ENCODE measurements at regions of chr11 and their contacts with region 1.

Region 1: DNA sequence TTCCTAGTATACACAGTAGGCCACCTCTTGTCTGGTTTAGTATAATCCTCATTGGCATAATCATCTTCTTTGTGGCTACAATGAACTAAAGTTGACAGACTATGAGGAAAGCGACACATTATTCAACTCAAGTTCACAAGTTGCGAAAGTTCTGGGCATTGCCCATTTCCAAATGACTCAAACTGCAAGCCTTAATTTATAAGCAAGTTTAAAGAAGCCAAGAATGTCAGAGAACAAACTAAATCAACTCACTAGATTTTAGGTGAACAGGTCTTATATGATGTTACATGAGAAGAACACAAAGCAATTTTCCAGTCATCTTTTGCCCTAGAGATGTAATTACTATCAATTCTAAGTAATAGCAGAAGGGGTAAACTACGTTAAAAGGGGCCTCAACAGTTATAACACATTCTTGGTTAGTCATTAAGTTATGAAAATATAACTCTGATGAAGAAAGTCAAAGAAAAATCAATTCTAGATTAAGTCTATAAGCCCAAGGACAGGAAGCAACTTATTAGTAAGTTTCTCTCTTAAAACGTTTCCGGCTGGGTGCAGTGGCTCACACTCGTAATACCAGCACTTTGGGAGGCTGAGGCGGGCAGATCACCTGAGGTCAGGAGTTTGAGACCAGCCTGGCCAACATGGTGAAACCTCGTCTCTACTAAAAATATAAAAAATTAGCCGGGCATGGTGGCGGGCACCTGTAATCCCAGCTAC is 21.5 kb downstream of the PICALM start:
- DNase-seq: peak in 1 of 2 donors; percentile 55
- ATAC-seq: peak; percentile 78 to 87 (median 84)
- H3K4me3 ChIP-seq: no peak overlapping the region
- H3K4me3 Mint-ChIP-seq: peak overlapping the region; percentile 68
- H3K27ac ChIP-seq: peak overlapping the region; percentile 49
- H3K27ac Mint-ChIP-seq: peak overlapping the region; percentile 83 to 87
- H3K4me1 ChIP-seq: peaks cover 52% of the 10 kb centered on the region
- H3K4me1 Mint-ChIP-seq: peaks cover 83 to 89% of the 10 kb centered on the region in 2 donors
- H3K27me3 ChIP-seq: no peaks in the 10 kb centered on the region
- H3K27me3 Mint-ChIP-seq: no peaks in the 10 kb centered on the region
- CTCF ChIP-seq: no peak

Region 2: GRCh38 chr11:86068951-86069407 is 21.5 kb after region 1 on chr11 and contains the start of gene PICALM:
- intact Hi-C with region 1: loop called (anchors 2 kb)
- DNase-seq: peak; percentile 90 to 99
- ATAC-seq: peak; percentile 71 to 92 (median 81)
- H3K4me3 ChIP-seq: peak within 1 kb of the TSS; percentile 76
- H3K4me3 Mint-ChIP-seq: peak within 1 kb of the TSS; percentile 100
- H3K27ac ChIP-seq: peak within 1 kb of the TSS; percentile 91
- H3K27ac Mint-ChIP-seq: peak within 1 kb of the TSS; percentile 97 to 100
- H3K4me1 ChIP-seq: peaks cover 20% of the 10 kb centered on the region
- H3K4me1 Mint-ChIP-seq: peaks cover 47 to 49% of the 10 kb centered on the region in 2 donors
- H3K27me3 ChIP-seq: no peaks in the 10 kb centered on the region
- H3K27me3 Mint-ChIP-seq: no peaks in the 10 kb centered on the region
- CTCF ChIP-seq: no peak
- total RNA-seq, gene PICALM: 262 to 291 (median 285) TPM

Measured in natural killer cell (primary cell).